Ovary (tissue), 10 donors: ENCODE measurements at regions of chr1 and their contacts with region 1.

Region 1: DNA sequence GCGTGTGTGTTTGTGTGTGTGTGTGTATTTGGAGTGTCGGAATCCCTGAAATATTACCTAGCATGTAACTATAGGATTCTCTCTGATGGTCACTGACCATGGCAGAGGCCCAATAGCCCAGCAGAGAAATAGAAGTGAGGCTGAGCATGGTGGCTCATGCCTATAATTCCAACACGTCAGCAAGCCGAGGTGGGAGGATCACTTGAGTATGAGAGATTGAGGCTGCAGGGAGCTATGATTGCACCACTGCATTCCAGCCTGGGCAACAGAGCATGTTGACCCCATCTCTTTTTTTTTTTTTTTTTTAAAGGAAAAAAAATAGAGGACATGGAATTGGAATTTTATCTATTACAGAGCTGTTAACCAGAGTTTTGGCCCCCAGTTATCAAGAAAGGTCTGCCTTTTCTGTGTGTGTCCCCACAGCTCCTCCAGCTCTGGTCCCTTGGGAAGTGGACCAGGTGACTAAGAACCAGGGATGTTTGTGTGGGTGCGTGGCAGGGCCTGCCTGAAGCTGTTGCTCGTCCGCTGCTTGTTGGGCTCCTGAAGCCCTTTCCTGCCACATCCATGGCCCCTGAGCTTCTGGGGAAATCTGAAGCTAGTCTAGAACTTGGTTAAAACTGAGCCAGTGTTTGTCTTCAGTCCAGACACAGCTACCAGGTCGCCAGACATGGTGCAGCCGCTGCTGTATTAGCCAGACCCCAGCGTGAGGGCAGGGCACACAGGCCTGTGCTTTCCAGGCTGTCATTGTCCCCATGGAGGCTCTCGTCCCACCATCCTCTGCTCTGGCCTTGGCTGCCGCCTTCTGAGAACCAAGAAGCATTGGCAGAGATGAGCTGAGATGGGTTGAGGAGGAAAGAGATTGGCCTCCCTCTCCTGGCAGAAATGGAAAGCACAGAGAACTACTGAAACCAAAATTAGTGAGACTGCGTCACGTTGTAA is 25.5 kb downstream of the CAPN9 start:
- DNase-seq: peak in 4 of 5 donors; percentile 22 to 44 (median 38)
- H3K4me3 ChIP-seq: no peak overlapping the region
- H3K27ac ChIP-seq: no peak overlapping the region
- H3K4me1 ChIP-seq: peaks cover 5% of the 10 kb centered on the region
- H3K27me3 ChIP-seq: no peaks in the 10 kb centered on the region
- CTCF ChIP-seq: peak in 1 of 3 donors; percentile 40
- EP300 ChIP-seq: no peak
- POLR2A ChIP-seq: no peak

Region 2: DNA sequence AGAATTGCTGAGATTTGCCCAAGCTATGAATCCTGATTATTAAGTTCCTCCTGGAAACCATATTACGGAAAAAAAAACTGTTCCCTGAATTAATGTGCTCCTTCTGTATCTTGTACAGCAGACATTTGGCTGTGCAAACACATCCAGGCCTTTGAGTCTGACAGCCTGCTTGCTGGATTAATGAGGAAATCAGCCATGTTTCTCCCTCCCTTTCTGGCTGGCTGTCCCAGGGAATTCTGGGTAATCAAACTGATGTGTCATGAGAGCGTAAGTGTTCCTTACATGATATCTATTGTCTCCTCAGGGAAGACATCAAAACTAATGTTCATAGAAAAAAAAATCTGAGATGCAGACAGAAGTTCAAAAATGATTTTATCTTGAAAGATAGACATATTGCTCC is 365.4 kb before region 1 on chr1:
- intact Hi-C with region 1: no loop called
- DNase-seq: no peak
- H3K4me3 ChIP-seq: no peak overlapping the region
- H3K27ac ChIP-seq: no peak overlapping the region
- H3K4me1 ChIP-seq: no peaks in the 10 kb centered on the region
- H3K27me3 ChIP-seq: no peaks in the 10 kb centered on the region
- CTCF ChIP-seq: no peak
- EP300 ChIP-seq: no peak
- POLR2A ChIP-seq: no peak

Region 3: GRCh38 chr1:230642263-230642959 is 130.3 kb before region 1 on chr1 and contains the start of gene COG2:
- intact Hi-C with region 1: loop called in 3 of 4 experiments (anchors 5 to 10 kb)
- DNase-seq: peak; percentile 89 to 96 (median 92)
- H3K4me3 ChIP-seq: peak within 1 kb of the TSS; percentile 88
- H3K27ac ChIP-seq: peak within 1 kb of the TSS in 1 of 2 donors; percentile 53
- H3K4me1 ChIP-seq: peaks cover 12% of the 10 kb centered on the region
- H3K27me3 ChIP-seq: no peaks in the 10 kb centered on the region
- CTCF ChIP-seq: peak; percentile 98 to 100 (median 98)
- EP300 ChIP-seq: no peak
- POLR2A ChIP-seq: peak; percentile 56
- total RNA-seq, gene COG2: 17.0 to 24.9 (median 21.5) TPM